ENCODE measurements at regions of chr12 and their contacts with region 1.

Region 1: GRCh38 chr12:110590806-110591326 is 7.7 kb upstream of the PPTC7 start:
- DNase-seq: no peak
- ATAC-seq: peak; percentile 29; the same call in 2 of the 3 replicates
- H3K4me3 ChIP-seq: no peak overlapping the region
- H3K27ac ChIP-seq: no peak overlapping the region; the same call in 2 of the 3 replicates
- H3K4me1 ChIP-seq: peaks cover 0 to 6% of the 10 kb centered on the region in 2 experiments; a peak in 4 of 5 replicates
- H3K27me3 ChIP-seq: no peaks in the 10 kb centered on the region
- CTCF ChIP-seq: no peak
- EP300 ChIP-seq: no peak
- POLR2A ChIP-seq: no peak
- RAD21 ChIP-seq: no peak

Region 2: DNA sequence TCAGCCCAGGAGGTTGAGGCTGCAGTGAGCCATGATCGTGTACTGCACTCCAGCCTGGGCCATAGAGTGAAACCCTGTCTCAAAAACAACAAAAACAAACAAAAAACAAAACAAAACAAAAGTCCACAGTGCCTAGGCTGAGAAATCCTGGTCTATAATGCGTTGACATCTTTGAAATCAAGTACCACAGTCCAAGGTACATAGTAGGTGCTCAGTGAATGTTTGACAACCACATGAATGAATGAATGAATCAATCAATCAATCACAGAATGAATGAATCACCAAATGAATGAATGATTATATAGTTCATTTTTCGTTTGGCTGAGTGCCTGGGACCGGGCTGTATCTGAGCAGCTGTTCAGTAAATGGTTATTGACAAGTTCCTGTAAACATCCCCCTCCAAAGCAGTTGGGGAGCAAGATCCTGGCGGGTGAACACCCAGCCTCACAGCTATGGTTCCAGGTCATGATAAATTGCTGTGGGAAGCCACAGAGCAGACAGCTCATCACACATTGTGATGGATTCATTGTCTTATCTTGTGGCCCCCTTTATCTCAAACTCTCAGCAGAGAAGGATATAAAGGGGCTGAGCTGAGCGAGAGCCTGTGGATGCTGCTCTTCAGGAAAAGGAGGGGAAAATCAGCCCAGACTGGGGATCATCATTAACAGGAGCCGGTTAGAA is 497.1 kb before region 1 on chr12:
- CTCF ChIA-PET with region 1: no interaction called
- POLR2A ChIA-PET with region 1: no interaction called
- in situ Hi-C with region 1: loop called (anchors 10 kb)
- intact Hi-C with region 1: no loop called
- DNase-seq: peak in 3 of 4 experiments; percentile 35 to 85 (median 68)
- ATAC-seq: peak; percentile 61
- H3K4me3 ChIP-seq: no peak overlapping the region
- H3K27ac ChIP-seq: no peak overlapping the region; the same call in 2 of the 3 replicates
- H3K4me1 ChIP-seq: peaks cover 35 to 36% of the 10 kb centered on the region in 2 experiments
- H3K27me3 ChIP-seq: no peaks in the 10 kb centered on the region
- CTCF ChIP-seq: no peak
- EP300 ChIP-seq: peak; percentile 80
- POLR2A ChIP-seq: no peak
- RAD21 ChIP-seq: peak in 1 of 2 experiments; percentile 26; a peak in 3 of 4 replicates

Measured in K562 (cell line).